HepG2 (cell line): ENCODE measurements at regions of chr1 and their contacts with region 1.

Region 1: GRCh38 chr1:1231400-1232223 is at the start of gene SDF4:
- DNase-seq: peak; percentile 88
- ATAC-seq: peak; percentile 84
- H3K4me3 ChIP-seq: peak within 1 kb of the TSS; percentile 73 to 93 (median 91)
- H3K27ac ChIP-seq: peak within 1 kb of the TSS; percentile 88
- H3K4me1 ChIP-seq: peaks cover 58% of the 10 kb centered on the region
- H3K27me3 ChIP-seq: no peaks in the 10 kb centered on the region; a peak in 2 of 5 replicates
- CTCF ChIP-seq: 0 out of 2 replicates have a peak, but pooled peaks have one; percentile 3
- EP300 ChIP-seq: no peak
- POLR2A ChIP-seq: peak in 1 of 2 experiments; percentile 68; a peak in 2 of 4 replicates
- RAD21 ChIP-seq: peak; percentile 67
- total RNA-seq, gene SDF4: 45.3 and 107 TPM in 2 replicates

Region 2: GRCh38 chr1:999725-1000356 is 231.8 kb before region 1 on chr1 and contains the start of gene HES4:
- CTCF ChIA-PET with region 1: no interaction called
- POLR2A ChIA-PET with region 1: interaction called, 3 read pairs
- in situ Hi-C with region 1: no loop called
- intact Hi-C with region 1: loop called (anchors 10 kb)
- DNase-seq: peak; percentile 87
- ATAC-seq: peak; percentile 59
- H3K4me3 ChIP-seq: peak within 1 kb of the TSS; percentile 63 to 78 (median 78)
- H3K27ac ChIP-seq: peak within 1 kb of the TSS; percentile 97
- H3K4me1 ChIP-seq: peaks cover 63% of the 10 kb centered on the region
- H3K27me3 ChIP-seq: no peaks in the 10 kb centered on the region
- CTCF ChIP-seq: no peak
- EP300 ChIP-seq: no peak
- POLR2A ChIP-seq: no peak; a peak in 1 of 4 replicates
- RAD21 ChIP-seq: peak; percentile 17; the same call in 1 of the 2 replicates
- total RNA-seq, gene HES4: 4.4 and 8.8 TPM in 2 replicates

Region 3: DNA sequence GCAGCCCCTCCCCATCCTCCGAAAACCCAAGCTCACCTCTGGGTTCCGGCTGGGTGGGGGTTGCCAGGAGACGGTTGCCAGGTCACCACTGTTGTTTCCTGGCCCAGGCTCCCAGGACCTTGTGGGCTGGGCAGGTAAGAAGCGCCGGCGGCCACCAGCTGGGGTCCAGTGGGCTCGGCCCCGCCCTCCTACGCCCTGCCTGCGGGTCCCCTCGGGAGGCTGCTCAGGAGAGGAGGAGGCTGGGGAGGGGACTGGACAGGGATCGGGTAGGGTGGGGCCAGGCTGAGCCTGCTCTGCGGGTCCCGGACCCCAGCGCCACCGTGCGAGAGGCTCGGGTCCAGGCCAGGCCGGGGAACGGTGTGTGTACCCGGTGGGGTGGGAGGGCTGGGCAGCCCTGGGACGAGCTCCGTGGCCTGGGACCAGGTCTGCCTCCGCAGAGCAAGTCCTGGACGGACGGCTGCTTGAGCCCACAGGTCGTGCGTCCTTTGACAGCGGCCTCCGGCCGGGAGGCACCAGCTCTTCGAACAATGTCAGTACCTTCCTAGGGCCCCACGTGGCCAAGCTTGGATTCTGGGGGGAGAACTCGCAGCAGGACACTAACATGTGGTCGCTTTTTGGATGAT is 57.7 kb before region 1 on chr1 and contains the start of gene TTLL10:
- CTCF ChIA-PET with region 1: no interaction called
- POLR2A ChIA-PET with region 1: interaction called, 3 read pairs
- in situ Hi-C with region 1: no loop called
- intact Hi-C with region 1: loop called (anchors 10 kb)
- DNase-seq: no peak
- ATAC-seq: peak; percentile 56
- H3K4me3 ChIP-seq: peak within 1 kb of the TSS in 1 of 3 experiments; percentile 33; a peak in 1 of 6 replicates
- H3K27ac ChIP-seq: no peak within 1 kb of the TSS
- H3K4me1 ChIP-seq: peaks cover 21% of the 10 kb centered on the region
- H3K27me3 ChIP-seq: peaks cover 37 to 70% of the 10 kb centered on the region in 2 experiments
- CTCF ChIP-seq: peak; percentile 69
- EP300 ChIP-seq: no peak
- POLR2A ChIP-seq: no peak
- RAD21 ChIP-seq: no peak
- total RNA-seq, gene TTLL10: not detected in 2 replicates

Region 4: GRCh38 chr1:1250786-1251284 is 19.2 kb after region 1 on chr1:
- CTCF ChIA-PET with region 1: no interaction called
- POLR2A ChIA-PET with region 1: no interaction called
- in situ Hi-C with region 1: no loop called
- intact Hi-C with region 1: no loop called
- DNase-seq: no peak
- ATAC-seq: peak; percentile 8; the same call in 1 of the 3 replicates
- H3K4me3 ChIP-seq: no peak overlapping the region
- H3K27ac ChIP-seq: no peak overlapping the region
- H3K4me1 ChIP-seq: no peaks in the 10 kb centered on the region
- H3K27me3 ChIP-seq: no peaks in the 10 kb centered on the region
- CTCF ChIP-seq: no peak
- EP300 ChIP-seq: no peak
- POLR2A ChIP-seq: no peak
- RAD21 ChIP-seq: no peak